ENCODE measurements at regions of chr9 and their contacts with region 1.

Region 1: GRCh38 chr9:12719431-12719830 is 26.2 kb downstream of the TYRP1 start:
- DNase-seq: no peak
- H3K4me3 Mint-ChIP-seq: no peak overlapping the region
- H3K27ac Mint-ChIP-seq: no peak overlapping the region
- H3K4me1 Mint-ChIP-seq: peaks cover 34% of the 10 kb centered on the region
- H3K27me3 Mint-ChIP-seq: no peaks in the 10 kb centered on the region
- CTCF ChIP-seq: no peak

Region 2: GRCh38 chr9:12775679-12776512 is 56.5 kb after region 1 on chr9:
- CTCF ChIA-PET with region 1: no interaction called
- intact Hi-C with region 1: loop called (anchors 1 kb)
- DNase-seq: peak; percentile 83
- H3K4me3 Mint-ChIP-seq: peak overlapping the region; percentile 99
- H3K27ac Mint-ChIP-seq: peak overlapping the region; percentile 91
- H3K4me1 Mint-ChIP-seq: peaks cover 20% of the 10 kb centered on the region
- H3K27me3 Mint-ChIP-seq: no peaks in the 10 kb centered on the region
- CTCF ChIP-seq: peak; percentile 12

Region 3: GRCh38 chr9:12884737-12885414 is 165.4 kb after region 1 on chr9:
- CTCF ChIA-PET with region 1: interaction called, 19 read pairs
- intact Hi-C with region 1: loop called (anchors 1 kb)
- DNase-seq: peak; percentile 22
- H3K4me3 Mint-ChIP-seq: peak overlapping the region; percentile 1
- H3K27ac Mint-ChIP-seq: peak overlapping the region; percentile 61
- H3K4me1 Mint-ChIP-seq: peaks cover 32% of the 10 kb centered on the region
- H3K27me3 Mint-ChIP-seq: no peaks in the 10 kb centered on the region
- CTCF ChIP-seq: no peak

Region 4: GRCh38 chr9:13023462-13023861 is 304.0 kb after region 1 on chr9:
- CTCF ChIA-PET with region 1: no interaction called
- intact Hi-C with region 1: loop called (anchors 10 kb)
- DNase-seq: no peak
- H3K4me3 Mint-ChIP-seq: no peak overlapping the region
- H3K27ac Mint-ChIP-seq: no peak overlapping the region
- H3K4me1 Mint-ChIP-seq: no peaks in the 10 kb centered on the region
- H3K27me3 Mint-ChIP-seq: peaks cover 40% of the 10 kb centered on the region
- CTCF ChIP-seq: no peak

Region 5: DNA sequence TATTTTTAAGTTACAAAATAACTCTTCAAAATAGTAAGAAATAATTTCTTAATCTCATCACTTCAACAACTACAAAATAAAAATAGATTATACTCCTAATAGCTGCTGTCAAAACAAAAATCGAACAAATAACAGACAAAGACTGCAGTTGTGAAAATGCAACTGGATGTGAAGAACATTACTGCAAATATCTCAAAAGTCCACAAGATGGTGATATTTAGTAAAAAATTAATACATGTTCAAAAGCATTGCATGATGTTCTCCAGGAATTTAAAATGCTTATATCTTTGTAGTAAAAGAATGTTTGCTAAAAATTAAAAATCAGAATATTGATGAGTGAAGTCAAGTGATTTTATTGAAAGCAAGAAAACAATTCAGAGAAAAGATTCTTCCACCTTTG is 493.9 kb after region 1 on chr9:
- CTCF ChIA-PET with region 1: no interaction called
- intact Hi-C with region 1: loop called (anchors 10 kb)
- DNase-seq: no peak
- H3K4me3 Mint-ChIP-seq: no peak overlapping the region
- H3K27ac Mint-ChIP-seq: no peak overlapping the region
- H3K4me1 Mint-ChIP-seq: no peaks in the 10 kb centered on the region
- H3K27me3 Mint-ChIP-seq: no peaks in the 10 kb centered on the region
- CTCF ChIP-seq: no peak